MCF 10A (cell line): ENCODE measurements at regions of chr1 and their contacts with region 1.

Region 1: DNA sequence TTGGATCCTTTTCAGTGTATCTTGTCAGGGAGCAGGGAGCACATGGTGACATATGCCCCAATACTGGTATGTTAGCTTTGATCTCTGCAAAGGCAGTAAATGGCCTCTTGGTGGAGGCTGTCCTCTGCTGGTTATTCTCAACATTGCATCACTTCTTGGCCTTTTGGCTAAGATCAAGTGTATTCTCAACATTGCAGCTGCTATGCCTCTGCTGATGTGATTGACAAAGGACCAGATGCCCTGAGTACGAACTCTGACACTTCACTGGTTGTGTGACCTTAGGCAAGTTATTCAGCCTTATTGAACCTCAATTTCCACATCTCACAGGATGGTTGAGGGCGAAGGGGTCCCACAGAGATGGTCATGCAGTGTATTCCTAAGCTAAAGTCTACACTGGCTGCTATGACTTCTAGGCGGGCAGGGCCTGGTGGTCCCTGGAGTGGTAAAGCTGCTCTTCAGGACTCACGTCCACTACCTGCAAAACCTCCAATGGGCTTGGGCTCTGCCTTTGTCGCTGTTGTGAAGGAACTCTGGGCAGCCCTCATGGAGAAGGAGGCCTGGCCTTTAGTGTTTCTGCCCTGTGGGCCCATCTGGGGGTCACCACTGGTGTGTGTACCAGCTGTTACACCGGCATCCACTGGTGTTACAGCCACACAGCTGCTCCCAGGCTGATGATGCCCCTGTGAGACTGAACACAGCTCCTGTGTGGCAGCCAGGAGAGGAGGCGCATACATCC is 64.8 kb downstream of the DNTTIP2 start:
- DNase-seq: peak; percentile 90
- H3K4me3 Mint-ChIP-seq: no peak overlapping the region
- H3K27ac Mint-ChIP-seq: no peak overlapping the region
- H3K4me1 Mint-ChIP-seq: peaks cover 52% of the 10 kb centered on the region
- H3K27me3 Mint-ChIP-seq: no peaks in the 10 kb centered on the region
- CTCF ChIP-seq: peak; percentile 97

Region 2: GRCh38 chr1:93196591-93196990 is 617.6 kb before region 1 on chr1:
- CTCF ChIA-PET with region 1: no interaction called
- POLR2A ChIA-PET with region 1: no interaction called
- intact Hi-C with region 1: no loop called
- DNase-seq: no peak
- H3K4me3 Mint-ChIP-seq: no peak overlapping the region
- H3K27ac Mint-ChIP-seq: no peak overlapping the region
- H3K4me1 Mint-ChIP-seq: peaks cover 5% of the 10 kb centered on the region
- H3K27me3 Mint-ChIP-seq: no peaks in the 10 kb centered on the region
- CTCF ChIP-seq: no peak

Region 3: DNA sequence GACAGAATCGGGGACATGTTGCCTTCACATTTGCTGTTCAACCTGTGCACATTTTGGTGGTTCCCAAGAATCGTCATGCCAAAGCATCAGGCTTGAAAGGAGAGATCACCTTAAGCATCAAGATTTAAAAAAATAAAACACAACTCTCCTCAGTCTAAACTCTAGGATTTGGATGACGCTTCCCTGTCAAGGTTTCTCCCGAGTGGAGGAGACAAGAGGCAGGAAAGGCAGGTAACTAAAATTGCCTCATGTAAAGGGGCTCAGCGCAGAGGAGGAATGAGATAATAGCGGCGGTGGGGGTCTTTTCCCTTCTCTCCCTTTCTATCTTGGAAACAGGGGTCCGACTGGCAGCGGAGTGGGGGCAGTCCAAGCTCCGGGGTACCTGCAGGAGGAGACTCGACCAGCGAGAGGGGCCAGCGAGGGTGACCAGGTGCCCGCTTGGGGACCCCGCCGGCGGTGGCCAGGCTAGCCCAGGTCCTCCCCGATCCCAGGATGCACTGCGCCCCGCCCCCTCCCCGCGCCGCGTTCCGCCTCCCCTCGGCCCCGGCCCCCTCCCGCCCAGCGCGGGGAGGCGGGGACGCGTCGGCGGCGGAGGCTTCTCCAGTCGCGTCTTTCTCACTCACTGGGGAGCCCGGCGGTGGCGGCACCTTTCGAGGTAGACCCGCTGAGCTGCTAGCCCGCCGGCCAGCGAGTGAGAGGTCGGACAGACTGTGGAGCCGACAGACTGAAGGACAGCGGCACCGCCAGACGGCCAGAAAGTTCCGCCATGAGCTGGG is 366.5 kb before region 1 on chr1 and contains the start of gene FNBP1L:
- CTCF ChIA-PET with region 1: interaction called, 15 read pairs
- POLR2A ChIA-PET with region 1: interaction called, 6 read pairs
- intact Hi-C with region 1: no loop called
- DNase-seq: peak; percentile 80
- H3K4me3 Mint-ChIP-seq: peak within 1 kb of the TSS; percentile 100
- H3K27ac Mint-ChIP-seq: peak within 1 kb of the TSS; percentile 95
- H3K4me1 Mint-ChIP-seq: peaks cover 27% of the 10 kb centered on the region
- H3K27me3 Mint-ChIP-seq: no peaks in the 10 kb centered on the region
- CTCF ChIP-seq: no peak
- total RNA-seq, gene FNBP1L: 30.7 and 31.8 TPM in 2 replicates

Region 4: DNA sequence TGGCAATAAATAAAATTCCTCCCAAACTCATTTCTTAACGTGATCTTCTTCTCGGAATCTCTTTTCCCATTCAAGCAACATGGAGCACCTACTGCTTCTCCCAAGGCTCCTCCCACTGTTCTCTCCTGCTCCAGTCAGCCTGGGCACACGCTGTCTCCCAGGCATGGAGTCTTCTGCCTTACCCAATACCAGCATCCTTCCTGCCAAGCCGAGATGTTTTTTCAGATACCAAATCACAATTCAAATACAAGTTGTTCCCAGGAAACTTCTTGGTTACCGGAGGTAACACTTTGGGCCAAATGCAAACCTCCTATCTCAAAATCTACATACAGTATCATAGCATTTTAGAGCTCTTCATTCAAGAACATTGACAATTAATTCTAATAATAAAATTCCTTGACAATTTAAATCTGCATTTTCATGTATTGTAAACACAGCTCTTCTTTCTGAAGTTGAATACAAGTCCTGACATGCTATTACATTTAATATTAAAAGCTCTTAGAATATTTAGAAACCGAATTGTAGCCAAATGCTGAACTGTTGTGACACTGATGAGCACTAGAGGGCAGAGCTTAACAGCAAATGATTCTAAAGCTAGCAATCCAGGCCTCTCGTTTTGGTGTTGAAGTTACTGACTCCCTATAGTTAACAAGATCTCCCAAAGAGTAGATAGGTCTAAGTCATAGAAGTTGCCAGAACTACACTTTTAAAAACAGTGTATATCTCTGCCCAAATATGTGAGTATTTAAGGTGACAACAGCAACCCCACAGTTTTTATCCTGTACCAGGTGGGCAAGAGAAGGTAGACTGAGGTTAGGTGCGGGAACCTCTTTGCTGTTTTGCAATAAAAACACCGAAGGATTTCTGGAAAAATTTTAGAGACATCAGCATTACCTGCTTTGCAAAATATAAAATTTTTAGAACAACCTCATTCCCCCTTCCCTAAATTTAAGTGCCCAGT is 184.8 kb before region 1 on chr1:
- CTCF ChIA-PET with region 1: interaction called, 250 read pairs
- POLR2A ChIA-PET with region 1: interaction called, 156 read pairs
- intact Hi-C with region 1: loop called (anchors 1 kb)
- DNase-seq: peak; percentile 76
- H3K4me3 Mint-ChIP-seq: peak overlapping the region; percentile 52
- H3K27ac Mint-ChIP-seq: peak overlapping the region; percentile 95
- H3K4me1 Mint-ChIP-seq: peaks cover 46% of the 10 kb centered on the region
- H3K27me3 Mint-ChIP-seq: no peaks in the 10 kb centered on the region
- CTCF ChIP-seq: peak; percentile 63

Region 5: GRCh38 chr1:93680757-93681550 is 133.3 kb before region 1 on chr1:
- CTCF ChIA-PET with region 1: interaction called, 28 read pairs
- POLR2A ChIA-PET with region 1: interaction called, 62 read pairs
- intact Hi-C with region 1: loop called (anchors 1 kb)
- DNase-seq: peak; percentile 91
- H3K4me3 Mint-ChIP-seq: peak overlapping the region; percentile 86
- H3K27ac Mint-ChIP-seq: peak overlapping the region; percentile 94
- H3K4me1 Mint-ChIP-seq: peaks cover 39% of the 10 kb centered on the region
- H3K27me3 Mint-ChIP-seq: no peaks in the 10 kb centered on the region
- CTCF ChIP-seq: peak; percentile 48

Region 6: GRCh38 chr1:93734999-93735398 is 79.2 kb before region 1 on chr1:
- CTCF ChIA-PET with region 1: interaction called, 16 read pairs
- POLR2A ChIA-PET with region 1: interaction called, 3 read pairs
- intact Hi-C with region 1: no loop called
- DNase-seq: no peak
- H3K4me3 Mint-ChIP-seq: no peak overlapping the region
- H3K27ac Mint-ChIP-seq: no peak overlapping the region
- H3K4me1 Mint-ChIP-seq: peaks cover 62% of the 10 kb centered on the region
- H3K27me3 Mint-ChIP-seq: no peaks in the 10 kb centered on the region
- CTCF ChIP-seq: peak; percentile 7

Region 7: DNA sequence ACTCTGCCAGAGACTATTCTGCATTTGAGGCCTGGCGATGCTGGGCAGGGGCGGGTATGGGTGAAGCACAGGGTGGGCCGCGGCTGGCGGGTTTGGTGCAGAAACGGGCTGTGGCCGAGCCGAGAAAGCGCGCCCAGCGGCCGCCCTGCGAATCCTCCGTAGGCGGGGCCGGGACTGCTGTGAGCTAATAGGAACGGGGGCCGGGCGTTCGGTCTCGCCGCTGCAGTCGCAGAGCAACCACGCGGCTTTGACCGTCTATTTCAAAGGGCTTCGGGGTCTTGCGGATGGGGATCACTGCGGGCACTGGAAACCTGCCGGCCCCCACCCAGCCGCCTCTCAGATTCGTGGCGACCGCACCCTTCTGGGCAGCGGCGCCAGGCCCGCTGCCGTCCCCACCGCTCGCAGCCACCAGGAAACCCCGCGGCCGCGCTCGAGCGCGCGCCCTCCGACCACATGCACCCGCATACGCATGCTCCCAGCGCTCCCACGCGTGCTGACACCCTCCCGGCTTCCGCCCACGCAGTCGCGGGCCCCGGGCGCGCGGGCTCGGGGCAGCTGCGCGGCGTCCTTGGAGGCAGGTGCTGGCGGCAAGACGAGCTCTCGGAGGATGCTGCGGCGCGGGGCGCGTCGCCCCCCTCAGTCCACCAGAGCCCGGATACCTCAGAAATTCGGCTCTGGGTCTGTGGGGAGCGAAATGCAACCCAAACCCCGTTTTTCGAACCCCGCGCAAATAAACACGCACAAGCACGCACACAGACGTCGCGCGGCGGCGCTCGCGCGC is 32.2 kb after region 1 on chr1:
- CTCF ChIA-PET with region 1: interaction called, 146 read pairs
- POLR2A ChIA-PET with region 1: interaction called, 49 read pairs
- intact Hi-C with region 1: loop called (anchors 1 kb)
- DNase-seq: peak; percentile 83
- H3K4me3 Mint-ChIP-seq: peak overlapping the region; percentile 96
- H3K27ac Mint-ChIP-seq: peak overlapping the region; percentile 92
- H3K4me1 Mint-ChIP-seq: peaks cover 7% of the 10 kb centered on the region
- H3K27me3 Mint-ChIP-seq: no peaks in the 10 kb centered on the region
- CTCF ChIP-seq: no peak

Region 8: GRCh38 chr1:93980320-93981273 is 166.4 kb after region 1 on chr1:
- CTCF ChIA-PET with region 1: no interaction called
- POLR2A ChIA-PET with region 1: no interaction called
- intact Hi-C with region 1: no loop called
- DNase-seq: no peak
- H3K4me3 Mint-ChIP-seq: no peak overlapping the region
- H3K27ac Mint-ChIP-seq: no peak overlapping the region
- H3K4me1 Mint-ChIP-seq: no peaks in the 10 kb centered on the region
- H3K27me3 Mint-ChIP-seq: no peaks in the 10 kb centered on the region
- CTCF ChIP-seq: no peak